ENCODE measurements at regions of chr9 and their contacts with region 1.

Region 1: DNA sequence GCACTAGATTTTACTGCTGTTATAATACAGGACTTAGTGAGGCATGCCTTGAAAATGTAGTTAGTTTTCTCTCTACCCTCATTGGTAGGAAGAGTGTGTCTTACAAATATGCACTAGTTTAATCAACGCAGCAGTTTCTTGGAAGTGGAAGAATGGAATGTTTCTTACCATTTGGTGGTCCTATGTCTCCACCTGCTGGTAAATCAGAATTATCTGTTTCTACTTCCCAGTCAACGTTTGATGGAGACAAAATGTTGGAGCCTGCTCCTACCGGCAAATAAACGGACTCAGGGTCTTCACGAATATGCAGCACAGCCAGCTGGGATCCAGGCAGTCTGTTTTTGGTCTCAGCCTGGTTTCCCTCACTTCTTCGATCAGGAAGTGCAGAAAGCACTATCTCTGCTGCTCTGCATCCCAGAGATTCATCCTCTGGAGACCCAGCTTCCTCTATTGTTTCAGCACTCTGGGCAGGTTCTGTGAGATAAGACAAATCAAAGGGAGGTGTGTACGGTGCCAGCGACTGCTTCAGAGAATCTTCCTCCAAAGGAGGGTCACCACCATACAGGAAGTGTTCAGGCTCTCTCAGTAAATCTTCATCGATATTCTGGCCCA is 59.5 kb upstream of the PCA3 start:
- DNase-seq: peak; percentile 14 to 66 (median 24)
- ATAC-seq: peak; percentile 70
- H3K4me3 ChIP-seq: no peak overlapping the region
- H3K27ac ChIP-seq: no peak overlapping the region
- H3K4me1 ChIP-seq: no peaks in the 10 kb centered on the region
- H3K27me3 ChIP-seq: peaks cover 3 to 26% of the 10 kb centered on the region in 2 experiments; a peak in 3 of 5 replicates
- CTCF ChIP-seq: peak; percentile 52 to 74 (median 57); a peak in 5 of 6 replicates
- EP300 ChIP-seq: no peak
- POLR2A ChIP-seq: no peak
- RAD21 ChIP-seq: peak; percentile 86 to 92

Region 2: DNA sequence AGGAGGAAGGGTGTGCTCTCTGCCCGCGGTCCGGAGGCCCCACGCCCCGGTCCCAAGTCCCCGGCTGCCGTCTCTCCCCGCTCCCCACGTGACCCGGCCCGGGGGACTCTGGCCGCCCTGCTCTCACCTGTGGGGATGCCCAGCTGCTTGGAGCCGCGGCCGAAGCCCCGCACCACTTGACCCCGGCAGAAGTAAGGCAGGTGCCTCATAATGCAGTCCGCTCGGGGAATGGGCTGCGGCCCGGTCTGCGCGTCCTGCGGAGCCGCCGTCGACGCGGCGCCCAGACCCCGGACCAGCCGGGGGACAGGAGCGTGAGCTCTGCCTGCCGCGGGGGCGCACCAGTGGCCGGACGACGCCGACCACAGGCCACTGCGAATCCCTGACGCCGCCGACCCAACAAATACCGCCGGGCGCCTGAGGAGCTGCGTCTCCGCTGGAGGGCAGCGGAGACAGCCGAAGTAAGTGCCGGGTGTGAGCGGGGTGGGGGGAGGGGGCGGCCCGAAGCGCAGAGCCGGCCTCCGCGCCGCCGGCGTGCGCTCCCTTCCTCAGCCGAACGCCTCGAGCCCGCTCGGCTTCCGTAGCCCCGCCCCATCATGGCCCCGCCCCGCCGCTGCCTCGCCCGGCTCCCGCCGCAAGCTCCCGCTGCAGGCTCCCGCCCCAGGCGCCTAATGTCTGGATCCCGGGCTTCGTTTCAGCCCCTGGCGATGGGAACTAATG is 310.6 kb before region 1 on chr9 and contains the start of gene RFK:
- CTCF ChIA-PET with region 1: interaction called, 8 read pairs
- POLR2A ChIA-PET with region 1: no interaction called
- in situ Hi-C with region 1: no loop called
- intact Hi-C with region 1: loop called (anchors 5 kb)
- DNase-seq: peak; percentile 86 to 91 (median 87)
- ATAC-seq: peak; percentile 95
- H3K4me3 ChIP-seq: peak within 1 kb of the TSS; percentile 85
- H3K27ac ChIP-seq: peak within 1 kb of the TSS; percentile 85
- H3K4me1 ChIP-seq: peaks cover 11% of the 10 kb centered on the region in 2 experiments; a peak in 3 of 5 replicates
- H3K27me3 ChIP-seq: no peaks in the 10 kb centered on the region
- CTCF ChIP-seq: peak; percentile 39 to 80 (median 74); a peak in 4 of 6 replicates
- EP300 ChIP-seq: no peak
- POLR2A ChIP-seq: peak; percentile 69
- RAD21 ChIP-seq: peak; percentile 58 to 65
- polyA plus RNA-seq, gene RFK: 3.8 to 7.0 TPM

Region 3: GRCh38 chr9:76403352-76403751 is 301.3 kb before region 1 on chr9:
- CTCF ChIA-PET with region 1: interaction called, 13 read pairs
- POLR2A ChIA-PET with region 1: no interaction called
- in situ Hi-C with region 1: no loop called
- intact Hi-C with region 1: loop called (anchors 5 kb)
- DNase-seq: peak in 2 of 4 experiments; percentile 9 to 11
- ATAC-seq: peak; percentile 64
- H3K4me3 ChIP-seq: no peak overlapping the region
- H3K27ac ChIP-seq: no peak overlapping the region
- H3K4me1 ChIP-seq: 0 out of 5 replicates have a peak, but pooled peaks cover 0 to 3% of the 10 kb centered on the region in 2 experiments
- H3K27me3 ChIP-seq: no peaks in the 10 kb centered on the region
- CTCF ChIP-seq: peak; percentile 29 to 64 (median 55); a peak in 3 of 6 replicates
- EP300 ChIP-seq: no peak
- POLR2A ChIP-seq: no peak
- RAD21 ChIP-seq: peak; percentile 38 to 45; a peak in 3 of 4 replicates

Region 4: DNA sequence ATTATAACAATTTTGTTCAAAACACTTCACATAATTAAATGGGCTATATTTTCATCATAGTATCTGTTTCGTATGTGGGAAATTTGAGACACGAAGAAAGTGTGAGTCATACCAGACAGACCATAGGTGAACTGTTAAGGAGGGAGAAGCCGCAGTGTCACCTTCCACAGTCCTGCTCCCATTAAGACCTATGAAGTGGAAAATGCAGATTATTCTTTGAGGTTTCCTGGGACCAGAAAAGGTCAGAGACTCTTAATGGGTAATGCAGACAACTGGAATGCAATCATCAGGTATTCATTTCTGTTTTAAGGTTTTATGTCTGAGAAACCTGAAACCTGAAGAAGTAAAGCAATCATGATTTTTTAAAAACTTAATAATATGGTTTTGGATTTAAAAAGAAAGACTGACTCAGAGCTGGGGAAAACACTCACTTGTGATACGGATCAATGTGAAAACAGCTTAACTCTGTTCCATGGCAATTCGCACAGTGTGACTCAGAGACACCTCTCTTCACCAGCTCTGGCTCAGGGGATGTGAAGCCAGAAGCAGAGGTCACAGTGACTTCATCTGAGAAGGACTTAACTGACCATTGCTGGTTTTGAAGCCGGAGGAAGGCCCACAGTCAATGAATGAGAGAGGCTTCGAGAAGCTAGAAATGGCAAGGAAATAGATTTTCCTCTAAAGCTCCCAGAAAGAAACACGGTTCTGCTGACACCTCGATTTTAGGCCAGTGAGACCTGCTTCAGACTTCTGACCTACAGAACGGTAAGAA is 263.0 kb before region 1 on chr9:
- CTCF ChIA-PET with region 1: interaction called, 9 read pairs
- POLR2A ChIA-PET with region 1: no interaction called
- in situ Hi-C with region 1: loop called (anchors 10 kb)
- intact Hi-C with region 1: no loop called
- DNase-seq: peak in 1 of 4 experiments; percentile 8
- ATAC-seq: no peak
- H3K4me3 ChIP-seq: no peak overlapping the region
- H3K27ac ChIP-seq: no peak overlapping the region
- H3K4me1 ChIP-seq: no peaks in the 10 kb centered on the region
- H3K27me3 ChIP-seq: no peaks in the 10 kb centered on the region
- CTCF ChIP-seq: no peak
- EP300 ChIP-seq: no peak
- POLR2A ChIP-seq: no peak
- RAD21 ChIP-seq: no peak

Region 5: DNA sequence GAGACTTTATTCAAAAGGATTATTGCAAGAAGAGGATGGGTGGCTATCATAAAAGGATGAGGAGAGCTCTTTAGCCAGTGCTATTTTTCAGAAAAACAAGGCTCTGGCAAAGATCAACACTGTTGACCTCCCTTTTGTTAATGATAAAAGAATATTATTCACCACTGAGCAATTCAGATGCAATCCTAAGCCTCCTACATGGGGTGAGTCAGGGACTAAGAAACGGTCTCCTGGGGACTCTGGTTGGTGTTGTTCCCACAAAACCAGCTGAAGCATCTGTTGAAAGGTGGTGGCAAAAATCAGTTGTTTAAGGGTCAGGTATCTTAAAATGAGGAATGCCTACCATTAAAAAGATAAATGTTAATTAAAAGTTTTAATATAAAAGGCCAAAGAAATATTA is 253.5 kb before region 1 on chr9:
- CTCF ChIA-PET with region 1: interaction called, 9 read pairs
- POLR2A ChIA-PET with region 1: no interaction called
- in situ Hi-C with region 1: loop called (anchors 10 kb)
- intact Hi-C with region 1: loop called (anchors 1 kb)
- DNase-seq: no peak
- ATAC-seq: no peak
- H3K4me3 ChIP-seq: no peak overlapping the region
- H3K27ac ChIP-seq: no peak overlapping the region
- H3K4me1 ChIP-seq: no peaks in the 10 kb centered on the region; a peak in 1 of 5 replicates
- H3K27me3 ChIP-seq: no peaks in the 10 kb centered on the region; a peak in 1 of 5 replicates
- CTCF ChIP-seq: no peak
- EP300 ChIP-seq: no peak
- POLR2A ChIP-seq: no peak
- RAD21 ChIP-seq: no peak